Activated naive CD8-positive, alpha-beta T cell treated with anti-CD3 and anti-CD28 coated beads, Interleukin-2, amount 10 ng/mL, durations not matched to agents 7 days and 5 days (primary cell): ENCODE measurements at regions of chr3 and their contacts with region 1.

Region 1: GRCh38 chr3:97971677-97972567 is at the start of gene RIOX2:
- DNase-seq: peak; percentile 80
- ATAC-seq: peak; percentile 87
- H3K4me3 Mint-ChIP-seq: peak within 1 kb of the TSS; percentile 86
- H3K27ac Mint-ChIP-seq: peak within 1 kb of the TSS; percentile 93
- H3K4me1 Mint-ChIP-seq: peaks cover 58% of the 10 kb centered on the region
- H3K27me3 Mint-ChIP-seq: no peaks in the 10 kb centered on the region
- total RNA-seq, gene RIOX2: 23.8 to 24.2 TPM

Region 2: DNA sequence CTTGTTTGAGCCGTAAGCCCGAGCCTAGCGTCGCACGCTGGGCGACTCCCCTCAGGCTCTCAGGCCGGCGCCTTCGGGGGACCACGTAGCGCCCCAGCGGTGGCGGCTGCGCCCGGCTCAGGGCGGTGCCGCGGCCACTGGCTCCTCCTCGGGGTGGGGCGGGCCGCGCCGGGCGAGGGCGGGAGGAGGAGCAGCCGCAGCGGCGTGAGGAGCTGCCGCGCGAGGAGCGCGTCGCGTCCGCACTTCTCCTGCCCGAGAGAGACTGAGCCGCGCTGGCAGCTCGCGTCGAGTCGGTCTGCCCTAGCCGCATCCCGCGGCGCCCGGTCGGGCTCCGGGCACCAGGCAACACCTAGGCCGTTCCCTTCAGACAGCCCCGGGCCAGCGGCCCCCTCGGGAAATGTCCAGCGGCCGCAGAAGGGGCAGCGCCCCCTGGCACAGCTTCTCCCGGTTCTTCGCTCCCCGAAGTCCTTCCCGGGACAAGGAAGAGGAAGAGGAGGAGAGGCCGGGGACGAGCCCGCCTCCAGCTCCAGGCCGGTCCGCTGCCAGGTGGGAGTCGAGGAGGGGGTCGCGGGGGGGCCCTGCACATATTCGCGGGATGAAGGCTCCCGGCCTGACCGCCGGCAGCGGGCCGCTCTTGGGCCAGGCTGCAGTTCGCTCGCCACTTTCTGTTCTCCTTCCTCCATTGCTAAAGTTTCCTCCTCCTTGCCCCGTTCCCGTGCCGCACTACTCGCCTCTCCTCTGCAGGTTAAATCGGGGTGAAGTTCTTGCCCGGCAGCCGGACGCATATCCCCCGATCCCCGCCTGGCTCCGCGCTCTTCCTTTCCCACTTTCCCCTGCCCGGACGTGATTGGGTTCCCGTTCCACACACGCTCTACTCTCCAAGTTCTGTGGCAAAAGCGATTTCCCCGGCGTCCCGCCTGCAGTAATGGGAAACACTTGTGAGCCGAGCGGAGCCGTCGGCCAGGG is 149.8 kb before region 1 on chr3 and contains the start of gene CRYBG3:
- POLR2A ChIA-PET with region 1: interaction called, 10 read pairs
- DNase-seq: peak; percentile 93
- ATAC-seq: peak; percentile 99
- H3K4me3 Mint-ChIP-seq: peak within 1 kb of the TSS; percentile 96
- H3K27ac Mint-ChIP-seq: peak within 1 kb of the TSS; percentile 84
- H3K4me1 Mint-ChIP-seq: peaks cover 13% of the 10 kb centered on the region
- H3K27me3 Mint-ChIP-seq: peaks cover 50% of the 10 kb centered on the region
- total RNA-seq, gene CRYBG3: 5.3 to 5.7 TPM